Naive thymus-derived CD4-positive, alpha-beta T cell (primary cell): ENCODE measurements at regions of chr2 and their contacts with region 1.

Region 1: DNA sequence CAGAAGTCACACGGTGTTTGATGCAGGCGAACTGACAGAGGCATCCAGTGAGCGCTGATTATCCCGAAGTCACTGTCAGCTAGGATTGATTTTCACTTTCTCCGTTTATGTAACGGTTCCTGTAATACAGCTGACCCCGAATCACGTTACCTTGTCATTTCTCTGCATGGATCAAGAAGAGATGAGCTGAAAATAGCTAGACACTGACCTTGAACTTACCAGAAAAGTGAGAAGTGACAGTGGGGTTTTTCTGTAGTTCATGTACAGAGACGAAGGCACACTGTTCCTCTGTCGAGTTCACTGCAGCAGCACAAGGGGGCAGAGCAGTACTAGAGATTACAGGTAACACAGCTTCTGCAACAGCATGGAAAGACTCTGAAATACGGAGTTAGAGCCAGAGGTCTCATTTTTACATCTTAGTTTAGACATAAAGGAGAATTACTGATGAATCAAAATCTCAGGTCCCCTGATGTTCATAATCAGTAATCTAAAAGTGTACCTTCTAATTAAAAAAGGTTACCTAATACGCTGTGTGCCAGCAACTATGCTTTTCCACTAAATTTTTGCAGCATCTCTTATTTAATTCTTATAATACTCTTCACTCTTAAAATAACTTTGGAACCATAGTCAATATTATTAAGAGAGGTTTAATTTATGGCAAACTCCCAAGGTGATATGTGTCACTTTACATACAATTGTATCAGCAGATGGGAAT is 33.1 kb downstream of the ARHGAP15 start:
- DNase-seq: peak in 8 of 9 donors; percentile 9 to 76 (median 67)
- ATAC-seq: peak; percentile 97
- H3K4me3 ChIP-seq: no peak overlapping the region
- H3K4me3 Mint-ChIP-seq: peak overlapping the region in 7 of 10 donors; percentile 0 to 53 (median 6)
- H3K27ac ChIP-seq: peak overlapping the region; percentile 18
- H3K27ac Mint-ChIP-seq: peak overlapping the region in 8 of 9 donors; percentile 50 to 91 (median 82)
- H3K4me1 ChIP-seq: peaks cover 13 to 58% of the 10 kb centered on the region in 2 donors
- H3K4me1 Mint-ChIP-seq: peaks cover 64 to 98% (median 93%) of the 10 kb centered on the region in 7 donors
- H3K27me3 ChIP-seq: no peaks in the 10 kb centered on the region
- H3K27me3 Mint-ChIP-seq: no peaks in the 10 kb centered on the region

Region 2: DNA sequence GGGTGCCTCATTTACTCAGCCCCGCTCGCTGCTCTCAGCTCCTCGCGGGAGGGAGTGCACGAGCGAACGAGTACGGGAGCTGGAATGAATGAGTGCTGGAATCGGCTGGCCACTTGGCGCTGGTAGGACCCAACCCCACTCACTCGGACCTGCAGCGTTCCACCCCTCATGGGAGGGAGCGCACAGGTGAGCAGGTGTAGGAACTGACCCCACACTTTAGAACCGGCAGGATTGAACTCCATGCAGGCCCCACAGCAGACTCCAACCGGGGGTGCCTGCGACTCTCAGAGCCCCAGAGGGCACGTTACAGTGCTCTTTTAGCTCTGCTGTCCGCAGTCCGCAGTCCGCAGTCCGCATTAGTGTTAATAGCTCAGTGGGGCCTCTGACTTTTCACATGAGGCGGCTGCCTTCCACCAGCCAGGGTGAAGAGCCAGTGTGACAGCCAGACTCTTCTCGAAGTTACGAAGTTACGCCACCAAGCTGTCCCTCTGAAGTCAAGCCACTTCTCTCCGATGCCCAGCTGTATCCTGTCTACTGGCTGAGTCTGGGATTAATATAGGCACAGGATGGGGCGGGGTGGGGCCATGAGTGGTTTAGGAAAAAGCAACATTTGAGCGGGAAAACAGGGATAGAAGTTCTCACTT is 135.7 kb before region 1 on chr2:
- CTCF ChIA-PET with region 1: no interaction called
- POLR2A ChIA-PET with region 1: no interaction called
- intact Hi-C with region 1: no loop called
- DNase-seq: no peak
- ATAC-seq: no peak
- H3K4me3 ChIP-seq: no peak overlapping the region
- H3K4me3 Mint-ChIP-seq: no peak overlapping the region
- H3K27ac ChIP-seq: no peak overlapping the region
- H3K27ac Mint-ChIP-seq: no peak overlapping the region
- H3K4me1 ChIP-seq: no peaks in the 10 kb centered on the region
- H3K4me1 Mint-ChIP-seq: peaks cover 0 to 9% (median 0%) of the 10 kb centered on the region in 7 donors
- H3K27me3 ChIP-seq: no peaks in the 10 kb centered on the region
- H3K27me3 Mint-ChIP-seq: peaks cover 9 to 42% (median 15%) of the 10 kb centered on the region in 5 donors

Region 3: DNA sequence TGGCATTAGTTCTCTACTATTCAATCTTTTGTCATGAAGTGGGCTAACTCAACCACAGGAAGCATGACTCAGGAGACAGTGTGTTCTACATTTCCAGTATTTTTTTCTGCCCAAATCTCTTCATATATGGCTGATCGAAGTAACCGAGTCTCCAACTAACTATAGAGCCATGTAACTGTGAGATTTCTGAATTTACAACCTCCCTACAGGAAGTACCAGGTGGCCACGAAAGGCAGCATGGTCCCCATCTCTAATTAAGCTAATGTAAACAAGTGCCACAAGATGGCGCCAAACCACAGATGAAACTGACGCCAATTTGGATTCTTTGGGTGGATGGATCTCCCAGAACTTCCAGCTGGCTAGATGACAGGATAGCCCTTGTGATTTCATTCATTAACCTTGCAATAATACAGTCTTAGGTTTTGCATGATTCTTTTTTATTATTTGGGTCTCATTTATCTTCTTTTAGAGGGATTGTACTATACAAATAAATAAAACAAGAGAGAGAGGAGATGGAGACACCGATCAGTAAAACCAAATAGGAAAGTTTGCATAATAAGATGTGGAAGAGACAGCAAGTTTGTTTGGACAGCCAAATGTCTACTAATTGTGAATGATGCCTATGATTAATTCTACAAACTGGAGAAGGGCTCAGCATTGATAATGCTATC is 51.4 kb before region 1 on chr2:
- CTCF ChIA-PET with region 1: interaction called, 53 read pairs
- POLR2A ChIA-PET with region 1: interaction called, 7 read pairs
- intact Hi-C with region 1: loop called (anchors 1 kb)
- DNase-seq: peak; percentile 18 to 70 (median 61)
- ATAC-seq: peak; percentile 90
- H3K4me3 ChIP-seq: no peak overlapping the region
- H3K4me3 Mint-ChIP-seq: peak overlapping the region in 4 of 10 donors; percentile 10 to 69 (median 60)
- H3K27ac ChIP-seq: no peak overlapping the region
- H3K27ac Mint-ChIP-seq: peak overlapping the region in 7 of 9 donors; percentile 17 to 83 (median 71)
- H3K4me1 ChIP-seq: peaks cover 0 to 20% of the 10 kb centered on the region in 2 donors
- H3K4me1 Mint-ChIP-seq: peaks cover 9 to 45% (median 38%) of the 10 kb centered on the region in 7 donors
- H3K27me3 ChIP-seq: no peaks in the 10 kb centered on the region
- H3K27me3 Mint-ChIP-seq: peaks cover 0 to 7% (median 6%) of the 10 kb centered on the region in 5 donors

Region 4: GRCh38 chr2:143150287-143150686 is 12.0 kb before region 1 on chr2:
- CTCF ChIA-PET with region 1: interaction called, 13 read pairs
- POLR2A ChIA-PET with region 1: interaction called, 7 read pairs
- intact Hi-C with region 1: loop called (anchors 1 kb)
- DNase-seq: peak in 2 of 9 donors; percentile 25 to 33
- ATAC-seq: peak; percentile 80
- H3K4me3 ChIP-seq: peak overlapping the region; percentile 17
- H3K4me3 Mint-ChIP-seq: peak overlapping the region; percentile 38 to 79 (median 70)
- H3K27ac ChIP-seq: peak overlapping the region; percentile 63
- H3K27ac Mint-ChIP-seq: peak overlapping the region; percentile 56 to 96 (median 84)
- H3K4me1 ChIP-seq: peaks cover 61 to 65% of the 10 kb centered on the region in 2 donors
- H3K4me1 Mint-ChIP-seq: peaks cover 68 to 100% (median 91%) of the 10 kb centered on the region in 7 donors
- H3K27me3 ChIP-seq: no peaks in the 10 kb centered on the region
- H3K27me3 Mint-ChIP-seq: no peaks in the 10 kb centered on the region

Region 5: GRCh38 chr2:143205106-143205764 is 43.0 kb after region 1 on chr2:
- CTCF ChIA-PET with region 1: interaction called, 10 read pairs
- POLR2A ChIA-PET with region 1: no interaction called
- intact Hi-C with region 1: loop called (anchors 1 to 2 kb)
- DNase-seq: peak in 7 of 9 donors; percentile 13 to 58 (median 44)
- ATAC-seq: peak; percentile 77
- H3K4me3 ChIP-seq: no peak overlapping the region
- H3K4me3 Mint-ChIP-seq: peak overlapping the region in 6 of 10 donors; percentile 0 to 58 (median 16)
- H3K27ac ChIP-seq: no peak overlapping the region
- H3K27ac Mint-ChIP-seq: peak overlapping the region in 8 of 9 donors; percentile 10 to 90 (median 58)
- H3K4me1 ChIP-seq: peaks cover 28 to 34% of the 10 kb centered on the region in 2 donors
- H3K4me1 Mint-ChIP-seq: peaks cover 30 to 85% (median 78%) of the 10 kb centered on the region in 7 donors
- H3K27me3 ChIP-seq: no peaks in the 10 kb centered on the region
- H3K27me3 Mint-ChIP-seq: no peaks in the 10 kb centered on the region

Region 6: GRCh38 chr2:143284087-143284675 is 121.9 kb after region 1 on chr2:
- CTCF ChIA-PET with region 1: interaction called, 9 read pairs
- POLR2A ChIA-PET with region 1: no interaction called
- intact Hi-C with region 1: loop called (anchors 1 to 5 kb)
- DNase-seq: peak in 6 of 9 donors; percentile 6 to 37 (median 26)
- ATAC-seq: peak; percentile 84
- H3K4me3 ChIP-seq: no peak overlapping the region
- H3K4me3 Mint-ChIP-seq: no peak overlapping the region
- H3K27ac ChIP-seq: no peak overlapping the region
- H3K27ac Mint-ChIP-seq: peak overlapping the region in 4 of 9 donors; percentile 13 to 67 (median 42)
- H3K4me1 ChIP-seq: no peaks in the 10 kb centered on the region
- H3K4me1 Mint-ChIP-seq: peaks cover 16 to 70% (median 49%) of the 10 kb centered on the region in 7 donors
- H3K27me3 ChIP-seq: no peaks in the 10 kb centered on the region
- H3K27me3 Mint-ChIP-seq: no peaks in the 10 kb centered on the region